T-cell (primary cell): ENCODE measurements at regions of chr21 and their contacts with region 1.

Region 1: DNA sequence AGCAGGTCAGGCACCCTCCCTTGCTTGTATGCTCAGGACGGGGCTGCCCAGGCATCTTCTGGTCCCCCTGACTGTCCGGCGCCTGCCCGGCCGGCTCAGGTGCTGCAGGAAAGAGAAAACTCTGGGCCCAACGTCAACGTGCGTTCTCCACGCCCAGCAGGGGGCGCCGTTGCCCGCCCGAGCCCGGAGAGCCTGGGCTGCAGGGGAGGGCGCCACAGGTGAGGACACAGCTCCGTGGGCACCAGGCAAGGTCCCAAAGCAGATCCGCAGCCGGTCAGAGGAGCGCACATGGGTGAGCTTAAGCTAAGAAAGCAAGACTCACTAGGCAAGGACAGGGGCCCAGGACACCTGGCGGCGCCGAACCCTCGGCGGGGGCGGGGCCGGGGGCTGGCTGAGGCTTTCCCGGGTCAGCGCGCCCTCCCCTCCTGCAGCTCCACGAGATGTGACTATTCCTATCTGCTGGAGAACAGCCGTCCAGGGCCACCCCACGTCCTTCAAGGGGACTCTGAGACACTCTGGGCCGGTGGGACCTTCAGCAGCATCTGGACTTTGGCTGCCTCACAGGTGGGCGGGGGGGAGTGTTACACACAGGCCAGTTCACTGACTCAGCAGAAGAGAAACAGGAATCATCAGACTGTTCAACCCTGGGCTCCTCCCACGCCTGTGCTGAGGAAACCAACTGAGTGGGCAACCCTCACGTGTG is 29.3 kb downstream of the KRTAP10-1 start:
- DNase-seq: peak; percentile 49 to 91 (median 77)
- ATAC-seq: peak; percentile 85 to 97 (median 92)
- H3K4me3 ChIP-seq: peak overlapping the region; percentile 48 to 53
- H3K4me3 Mint-ChIP-seq: peak overlapping the region; percentile 39 to 55 (median 46)
- H3K27ac ChIP-seq: no peak overlapping the region
- H3K27ac Mint-ChIP-seq: no peak overlapping the region
- H3K4me1 ChIP-seq: peaks cover 0 to 16% of the 10 kb centered on the region in 2 experiments
- H3K4me1 Mint-ChIP-seq: peaks cover 0 to 6% (median 4%) of the 10 kb centered on the region in 3 donors
- H3K27me3 ChIP-seq: peaks cover 0 to 30% of the 10 kb centered on the region in 2 experiments
- H3K27me3 Mint-ChIP-seq: no peaks in the 10 kb centered on the region

Region 2: DNA sequence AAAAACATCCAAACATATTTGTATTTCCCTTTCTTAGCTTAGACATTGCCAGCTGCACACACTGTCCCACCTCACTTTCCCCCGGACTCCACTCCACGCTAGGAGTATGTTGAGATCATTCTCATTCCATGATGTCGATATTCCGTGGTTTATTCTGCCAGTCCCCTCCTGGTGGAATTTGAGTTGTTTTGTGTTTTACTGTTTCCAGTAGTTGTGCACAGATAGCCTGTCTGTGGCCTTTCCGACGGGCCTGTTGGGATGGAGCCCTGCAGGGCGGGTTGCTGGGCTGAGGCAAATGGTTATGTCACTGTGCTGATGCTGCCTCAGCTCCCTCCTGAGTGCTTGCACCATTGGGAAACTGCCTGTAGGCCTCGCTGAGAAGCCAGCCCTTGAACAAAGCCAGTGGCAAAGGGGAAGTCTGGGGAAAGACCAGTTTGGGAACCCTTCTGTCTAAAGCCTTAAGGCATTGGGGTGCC is 485.7 kb before region 1 on chr21:
- CTCF ChIA-PET with region 1: no interaction called
- POLR2A ChIA-PET with region 1: no interaction called
- DNase-seq: peak in 1 of 35 experiments; percentile 10
- ATAC-seq: no peak
- H3K4me3 ChIP-seq: no peak overlapping the region
- H3K4me3 Mint-ChIP-seq: peak overlapping the region; percentile 13 to 69 (median 28)
- H3K27ac ChIP-seq: no peak overlapping the region
- H3K27ac Mint-ChIP-seq: peak overlapping the region; percentile 71 to 79
- H3K4me1 ChIP-seq: peaks cover 31 to 71% of the 10 kb centered on the region in 2 experiments
- H3K4me1 Mint-ChIP-seq: peaks cover 91 to 95% (median 92%) of the 10 kb centered on the region in 3 donors
- H3K27me3 ChIP-seq: no peaks in the 10 kb centered on the region
- H3K27me3 Mint-ChIP-seq: no peaks in the 10 kb centered on the region

Region 3: DNA sequence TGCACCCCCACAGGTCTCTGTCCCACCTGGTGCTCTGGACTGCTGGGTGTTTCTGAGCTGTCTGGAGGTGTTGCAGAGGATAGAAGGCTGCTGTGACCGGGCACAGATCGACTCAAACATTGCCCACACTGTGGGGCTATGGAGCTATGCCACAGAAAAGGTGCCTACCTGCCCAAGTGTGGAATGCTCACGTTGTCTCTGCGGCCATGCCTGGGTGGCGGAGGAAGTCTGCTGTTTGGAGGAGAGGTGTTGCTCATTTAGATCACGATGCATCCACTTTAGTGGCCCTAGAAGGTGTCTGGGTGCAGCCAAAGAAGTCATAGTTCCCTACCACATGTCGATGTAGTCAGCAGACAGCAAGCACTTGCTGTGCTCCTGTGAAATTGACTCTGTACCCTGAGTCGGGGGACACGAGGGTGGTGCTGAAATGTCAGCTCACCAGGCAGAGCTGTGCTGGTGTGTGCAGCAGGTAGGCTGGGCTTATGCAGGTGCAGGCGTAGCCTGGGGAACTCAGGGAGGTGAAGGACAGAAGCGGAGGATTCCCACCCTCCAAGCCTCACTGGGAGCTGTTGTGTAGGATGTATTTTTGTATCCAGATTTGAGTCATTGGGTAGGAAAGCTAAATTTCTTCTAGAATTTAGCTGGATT is 436.2 kb before region 1 on chr21:
- CTCF ChIA-PET with region 1: no interaction called
- POLR2A ChIA-PET with region 1: no interaction called
- DNase-seq: peak in 15 of 35 experiments; percentile 20 to 57 (median 33)
- ATAC-seq: peak; percentile 64 to 76 (median 66)
- H3K4me3 ChIP-seq: no peak overlapping the region
- H3K4me3 Mint-ChIP-seq: no peak overlapping the region
- H3K27ac ChIP-seq: no peak overlapping the region
- H3K27ac Mint-ChIP-seq: peak overlapping the region; percentile 21 to 68
- H3K4me1 ChIP-seq: peaks cover 4 to 18% of the 10 kb centered on the region in 2 experiments
- H3K4me1 Mint-ChIP-seq: peaks cover 29 to 45% (median 31%) of the 10 kb centered on the region in 3 donors
- H3K27me3 ChIP-seq: no peaks in the 10 kb centered on the region
- H3K27me3 Mint-ChIP-seq: no peaks in the 10 kb centered on the region

Region 4: GRCh38 chr21:44454747-44455523 is 55.7 kb before region 1 on chr21 and contains the start of gene LRRC3:
- CTCF ChIA-PET with region 1: no interaction called
- POLR2A ChIA-PET with region 1: no interaction called
- DNase-seq: peak; percentile 48 to 89 (median 74)
- ATAC-seq: peak; percentile 70 to 84 (median 81)
- H3K4me3 ChIP-seq: peak within 1 kb of the TSS; percentile 55 to 85
- H3K4me3 Mint-ChIP-seq: peak within 1 kb of the TSS; percentile 67 to 78 (median 69)
- H3K27ac ChIP-seq: no peak within 1 kb of the TSS
- H3K27ac Mint-ChIP-seq: peak within 1 kb of the TSS in 1 of 2 donors; percentile 2
- H3K4me1 ChIP-seq: peaks cover 0 to 15% of the 10 kb centered on the region in 2 experiments
- H3K4me1 Mint-ChIP-seq: peaks cover 0 to 11% (median 7%) of the 10 kb centered on the region in 3 donors
- H3K27me3 ChIP-seq: peaks cover 0 to 28% of the 10 kb centered on the region in 2 experiments
- H3K27me3 Mint-ChIP-seq: peaks cover 5 to 6% of the 10 kb centered on the region in 2 donors
- total RNA-seq, gene LRRC3: 0.76 to 2.2 (median 0.98) TPM

Region 5: GRCh38 chr21:44792702-44793591 is 282.3 kb after region 1 on chr21:
- CTCF ChIA-PET with region 1: interaction called, 9 to 29 read pairs
- POLR2A ChIA-PET with region 1: no interaction called
- DNase-seq: peak; percentile 16 to 72 (median 42)
- ATAC-seq: peak; percentile 90 to 95 (median 92)
- H3K4me3 ChIP-seq: no peak overlapping the region
- H3K4me3 Mint-ChIP-seq: no peak overlapping the region
- H3K27ac ChIP-seq: no peak overlapping the region
- H3K27ac Mint-ChIP-seq: peak overlapping the region in 1 of 2 donors; percentile 15
- H3K4me1 ChIP-seq: peaks cover 0 to 10% of the 10 kb centered on the region in 2 experiments
- H3K4me1 Mint-ChIP-seq: peaks cover 49 to 59% (median 59%) of the 10 kb centered on the region in 3 donors
- H3K27me3 ChIP-seq: no peaks in the 10 kb centered on the region
- H3K27me3 Mint-ChIP-seq: no peaks in the 10 kb centered on the region